ENCODE measurements at regions of chr11 and their contacts with region 1.

Region 1: DNA sequence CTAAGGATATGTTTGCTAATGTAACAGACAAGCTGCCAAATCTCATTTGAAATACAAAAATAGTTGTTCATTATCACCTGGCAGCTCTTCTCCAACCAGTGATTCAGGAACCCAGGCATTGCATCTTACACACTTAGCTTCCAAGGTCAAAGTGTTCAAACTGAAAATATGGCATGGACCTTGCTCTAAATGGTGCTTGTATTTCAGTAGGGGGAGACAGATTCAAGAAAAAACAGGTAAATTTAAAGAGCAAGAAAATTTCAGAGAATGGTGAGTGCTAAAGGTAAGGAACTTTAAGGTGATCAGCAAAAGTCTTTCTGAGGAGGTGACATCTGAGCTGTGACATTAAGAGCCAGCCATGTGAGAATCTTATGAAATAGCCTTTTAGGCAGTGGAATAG is 82.8 kb upstream of the E2F8 start:
- DNase-seq: no peak
- H3K4me3 Mint-ChIP-seq: no peak overlapping the region
- H3K27ac Mint-ChIP-seq: no peak overlapping the region
- H3K4me1 Mint-ChIP-seq: no peaks in the 10 kb centered on the region
- H3K27me3 Mint-ChIP-seq: peaks cover 92% of the 10 kb centered on the region
- CTCF ChIP-seq: no peak

Region 2: GRCh38 chr11:19398772-19399527 is 75.4 kb after region 1 on chr11:
- CTCF ChIA-PET with region 1: no interaction called
- intact Hi-C with region 1: no loop called
- DNase-seq: no peak
- H3K4me3 Mint-ChIP-seq: no peak overlapping the region
- H3K27ac Mint-ChIP-seq: no peak overlapping the region
- H3K4me1 Mint-ChIP-seq: no peaks in the 10 kb centered on the region
- H3K27me3 Mint-ChIP-seq: peaks cover 19% of the 10 kb centered on the region
- CTCF ChIP-seq: no peak

Region 3: GRCh38 chr11:19499026-19499669 is 175.6 kb after region 1 on chr11:
- CTCF ChIA-PET with region 1: no interaction called
- intact Hi-C with region 1: no loop called
- DNase-seq: no peak
- H3K4me3 Mint-ChIP-seq: no peak overlapping the region
- H3K27ac Mint-ChIP-seq: no peak overlapping the region
- H3K4me1 Mint-ChIP-seq: no peaks in the 10 kb centered on the region
- H3K27me3 Mint-ChIP-seq: peaks cover 37% of the 10 kb centered on the region
- CTCF ChIP-seq: no peak

Region 4: DNA sequence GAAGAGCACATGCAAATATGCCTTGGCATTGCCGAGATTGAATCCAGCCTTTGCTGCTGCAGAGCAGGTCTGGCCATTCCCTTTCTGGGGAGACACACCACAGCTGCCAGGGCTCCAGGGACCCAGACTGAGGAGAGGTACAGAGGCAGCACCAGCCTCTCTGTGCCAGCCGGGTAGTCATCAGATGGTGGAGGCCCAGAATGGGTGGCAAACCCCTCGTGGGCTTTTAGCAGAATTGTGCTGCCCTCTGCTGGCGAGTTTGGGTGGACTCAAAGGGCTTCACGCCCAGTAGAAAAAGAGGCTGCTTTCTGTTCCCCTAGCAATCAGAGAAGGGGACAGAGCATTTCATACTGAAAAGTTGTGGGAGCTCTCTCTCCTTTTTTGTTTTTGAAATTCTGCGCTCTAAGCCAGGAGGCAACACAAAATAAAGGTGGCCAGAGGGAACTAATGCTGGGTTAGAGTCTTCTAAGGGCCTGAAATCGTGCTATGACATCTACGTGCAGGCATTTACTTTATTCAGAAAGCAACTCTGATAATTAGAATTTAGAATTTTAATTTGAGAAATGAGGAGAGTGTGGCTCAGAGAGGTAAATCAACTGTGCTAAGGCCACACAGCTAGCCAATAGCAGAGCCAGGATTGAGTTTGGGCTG is 230.3 kb after region 1 on chr11:
- CTCF ChIA-PET with region 1: interaction called, 4 read pairs
- intact Hi-C with region 1: loop called (anchors 1 kb)
- DNase-seq: peak; percentile 86
- H3K4me3 Mint-ChIP-seq: no peak overlapping the region
- H3K27ac Mint-ChIP-seq: no peak overlapping the region
- H3K4me1 Mint-ChIP-seq: peaks cover 8% of the 10 kb centered on the region
- H3K27me3 Mint-ChIP-seq: peaks cover 70% of the 10 kb centered on the region
- CTCF ChIP-seq: peak; percentile 78